Vagina (tissue), 2 donors: ENCODE measurements at regions of chr11 and their contacts with region 1.

Region 1: DNA sequence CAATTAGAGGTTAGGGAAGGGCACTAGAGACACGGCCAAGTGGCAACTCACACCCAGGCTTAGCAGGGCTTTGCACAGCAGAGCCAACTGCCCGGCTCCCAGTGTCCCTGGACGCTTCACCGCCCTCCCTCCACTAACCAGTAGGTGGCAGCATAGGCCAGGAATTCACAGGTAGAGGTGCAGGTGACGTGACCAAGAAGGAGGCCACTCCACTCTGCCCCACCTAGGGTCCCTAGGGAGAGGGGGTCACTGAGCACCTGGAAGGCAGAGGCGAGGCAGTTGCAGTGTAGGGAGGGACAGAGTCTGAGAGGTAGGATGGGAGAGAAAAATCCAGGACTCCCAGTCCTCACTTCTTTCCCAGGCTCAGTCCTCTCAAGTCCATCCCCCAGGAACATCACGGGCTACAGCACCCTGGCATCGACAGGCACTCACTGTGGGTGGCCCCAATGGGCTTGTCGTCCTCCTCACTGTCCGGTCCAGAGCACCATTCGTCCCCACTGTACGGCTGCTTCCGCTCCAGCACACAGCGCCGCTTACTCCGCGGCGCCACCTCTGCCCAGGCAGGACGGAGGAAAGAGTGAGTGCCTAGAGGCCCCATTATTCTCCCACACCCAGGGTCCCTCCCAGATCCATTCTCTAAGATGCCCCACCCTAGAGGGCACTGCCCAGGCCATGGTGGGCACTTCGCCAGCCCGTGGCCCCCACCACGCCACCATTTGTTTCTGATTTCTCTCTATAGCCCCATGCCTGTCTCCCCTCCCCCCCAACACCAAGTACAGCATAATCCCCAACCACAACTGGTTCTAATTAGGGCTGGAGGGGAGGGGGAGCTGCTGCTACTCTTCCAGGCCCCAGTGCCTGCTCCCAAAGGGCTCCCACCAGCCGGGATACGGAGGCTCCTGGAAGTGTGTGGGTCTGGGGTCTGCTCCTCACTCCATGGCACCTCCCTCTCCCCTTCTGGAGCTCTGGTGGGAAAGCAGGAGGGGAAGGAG is 18.4 kb downstream of the BCL9L start:
- DNase-seq: no peak
- H3K4me3 ChIP-seq: no peak overlapping the region
- H3K27ac ChIP-seq: peak overlapping the region; percentile 96
- H3K4me1 ChIP-seq: peaks cover 57% of the 10 kb centered on the region
- H3K27me3 ChIP-seq: no peaks in the 10 kb centered on the region
- CTCF ChIP-seq: peak; percentile 88 to 97 (median 95)
- POLR2A ChIP-seq: no peak

Region 2: GRCh38 chr11:118928108-118928870 is 20.9 kb after region 1 on chr11:
- intact Hi-C with region 1: loop called (anchors 2 kb)
- DNase-seq: peak in 1 of 2 donors; percentile 99
- H3K4me3 ChIP-seq: peak overlapping the region; percentile 64 to 89
- H3K27ac ChIP-seq: peak overlapping the region; percentile 96
- H3K4me1 ChIP-seq: peaks cover 37% of the 10 kb centered on the region
- H3K27me3 ChIP-seq: no peaks in the 10 kb centered on the region
- CTCF ChIP-seq: peak; percentile 77 to 94 (median 93)
- POLR2A ChIP-seq: no peak

Region 3: GRCh38 chr11:118956094-118956846 is 48.9 kb after region 1 on chr11 and contains the start of gene UPK2:
- intact Hi-C with region 1: loop called (anchors 2 kb)
- DNase-seq: no peak
- H3K4me3 ChIP-seq: no peak within 1 kb of the TSS
- H3K27ac ChIP-seq: no peak within 1 kb of the TSS
- H3K4me1 ChIP-seq: no peaks in the 10 kb centered on the region
- H3K27me3 ChIP-seq: no peaks in the 10 kb centered on the region
- CTCF ChIP-seq: peak; percentile 86 to 98 (median 98)
- POLR2A ChIP-seq: no peak
- total RNA-seq, gene UPK2: not detected